ENCODE measurements at regions of chr1 and their contacts with region 1.

Region 1: DNA sequence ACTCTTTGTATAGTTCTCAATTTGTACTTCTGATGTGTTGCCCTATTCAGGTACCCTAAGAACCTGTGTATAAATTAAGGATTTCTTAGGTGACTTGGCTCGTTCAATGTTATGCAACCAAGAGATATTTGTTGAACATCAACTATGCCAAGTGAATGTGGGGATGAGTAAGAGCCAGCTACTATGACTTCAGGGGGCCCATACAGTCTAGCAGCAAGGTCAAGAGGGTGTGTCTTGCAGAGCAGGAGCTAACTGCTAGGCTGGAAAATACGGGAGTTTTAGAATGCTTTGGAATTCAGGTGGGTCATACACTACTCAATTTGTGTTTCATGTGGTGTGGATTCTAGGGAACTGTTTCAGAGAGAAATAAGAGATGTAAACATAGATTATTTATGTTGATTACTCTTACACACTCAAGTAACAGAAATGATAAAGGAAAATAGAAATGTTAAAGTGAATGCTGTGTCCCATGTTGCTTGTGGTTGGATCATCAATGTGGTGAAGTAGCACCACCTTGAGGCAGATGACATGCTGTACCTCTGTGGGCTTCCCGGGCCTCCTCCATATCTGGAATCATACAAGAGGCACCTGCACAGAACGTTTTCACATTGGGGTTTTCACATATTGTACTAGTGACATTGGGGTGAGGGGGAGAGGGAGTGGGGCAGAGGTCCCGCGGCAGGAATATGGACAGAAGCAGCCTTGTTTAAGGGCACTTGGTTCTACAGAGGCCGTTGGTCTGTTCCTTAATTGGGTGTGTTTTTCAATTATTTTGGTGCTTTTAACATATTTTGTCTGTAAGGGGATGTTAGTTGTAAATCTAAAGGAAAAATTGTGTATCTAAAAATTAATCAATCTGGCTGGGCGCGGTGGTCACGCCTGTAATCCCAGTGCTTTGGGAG is 12.4 kb downstream of the ARPC5 start:
- H3K4me3 Mint-ChIP-seq: no peak overlapping the region
- H3K27ac Mint-ChIP-seq: peak overlapping the region; percentile 73
- H3K4me1 Mint-ChIP-seq: peaks cover 37% of the 10 kb centered on the region
- H3K27me3 Mint-ChIP-seq: no peaks in the 10 kb centered on the region

Region 2: GRCh38 chr1:183124259-183124658 is 498.9 kb before region 1 on chr1:
- intact Hi-C with region 1: no loop called
- H3K4me3 Mint-ChIP-seq: no peak overlapping the region
- H3K27ac Mint-ChIP-seq: no peak overlapping the region
- H3K4me1 Mint-ChIP-seq: no peaks in the 10 kb centered on the region
- H3K27me3 Mint-ChIP-seq: no peaks in the 10 kb centered on the region

Region 3: GRCh38 chr1:183339556-183340167 is 283.5 kb before region 1 on chr1:
- intact Hi-C with region 1: no loop called
- H3K4me3 Mint-ChIP-seq: no peak overlapping the region
- H3K27ac Mint-ChIP-seq: no peak overlapping the region
- H3K4me1 Mint-ChIP-seq: no peaks in the 10 kb centered on the region
- H3K27me3 Mint-ChIP-seq: peaks cover 5% of the 10 kb centered on the region

Region 4: GRCh38 chr1:183567584-183567983 is 55.6 kb before region 1 on chr1:
- intact Hi-C with region 1: loop called (anchors 10 kb)
- H3K4me3 Mint-ChIP-seq: peak overlapping the region; percentile 14
- H3K27ac Mint-ChIP-seq: peak overlapping the region; percentile 86
- H3K4me1 Mint-ChIP-seq: peaks cover 87% of the 10 kb centered on the region
- H3K27me3 Mint-ChIP-seq: no peaks in the 10 kb centered on the region

Region 5: DNA sequence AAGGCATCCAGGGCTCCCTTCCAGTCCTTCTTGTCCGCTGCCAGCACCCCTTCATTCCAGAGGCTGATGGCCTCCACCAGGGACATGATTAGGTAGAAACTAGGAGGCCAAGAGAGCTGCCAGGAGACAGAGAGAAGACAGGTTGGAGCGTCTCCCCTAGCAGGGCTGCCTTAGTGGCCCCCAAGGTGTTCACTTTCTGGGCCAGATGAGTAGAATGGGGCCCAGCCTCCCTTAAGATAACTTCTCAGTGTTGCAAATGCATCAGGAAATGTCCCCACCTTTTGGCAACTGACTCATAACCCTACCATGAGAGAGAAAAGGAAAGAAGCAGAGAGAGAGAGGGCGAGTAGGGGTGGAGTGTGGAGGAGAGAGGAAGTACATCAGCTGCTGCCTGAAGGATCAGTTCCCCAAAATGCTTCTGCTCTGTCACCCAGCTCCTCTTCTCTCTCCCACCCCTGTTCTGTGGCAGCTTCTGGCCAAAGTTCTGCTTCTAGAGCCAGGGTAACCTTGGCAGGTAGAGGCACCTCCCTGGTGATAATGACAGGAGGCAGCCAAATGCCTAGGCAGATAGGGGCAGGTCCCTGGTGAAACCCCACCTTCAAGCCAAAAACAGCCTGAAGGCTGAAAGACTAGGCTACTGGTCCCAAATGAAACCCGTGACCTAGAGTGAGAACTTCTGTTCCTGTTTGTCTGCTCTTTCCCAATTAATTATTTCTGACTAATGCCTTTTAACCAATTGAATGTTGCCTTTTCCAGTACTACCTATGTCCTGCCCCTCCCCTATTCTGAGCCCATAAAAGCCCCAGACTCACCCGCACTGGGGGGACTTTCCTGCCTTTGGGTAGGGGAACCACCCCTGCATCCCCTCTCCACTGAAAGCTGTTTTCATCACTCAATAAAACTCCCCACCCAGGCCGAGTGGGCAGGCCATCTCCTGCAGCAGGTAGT is 32.6 kb before region 1 on chr1 and contains the start of gene NCF2:
- intact Hi-C with region 1: loop called (anchors 5 kb)
- H3K4me3 Mint-ChIP-seq: peak within 1 kb of the TSS; percentile 93
- H3K27ac Mint-ChIP-seq: peak within 1 kb of the TSS; percentile 95
- H3K4me1 Mint-ChIP-seq: peaks cover 48% of the 10 kb centered on the region
- H3K27me3 Mint-ChIP-seq: no peaks in the 10 kb centered on the region

Region 6: GRCh38 chr1:183609313-183609712 is 13.8 kb before region 1 on chr1:
- intact Hi-C with region 1: loop called (anchors 2 kb)
- H3K4me3 Mint-ChIP-seq: peak overlapping the region; percentile 23
- H3K27ac Mint-ChIP-seq: peak overlapping the region; percentile 97
- H3K4me1 Mint-ChIP-seq: peaks cover 66% of the 10 kb centered on the region
- H3K27me3 Mint-ChIP-seq: no peaks in the 10 kb centered on the region